ENCODE measurements at regions of chr1 and their contacts with region 1.

Region 1: DNA sequence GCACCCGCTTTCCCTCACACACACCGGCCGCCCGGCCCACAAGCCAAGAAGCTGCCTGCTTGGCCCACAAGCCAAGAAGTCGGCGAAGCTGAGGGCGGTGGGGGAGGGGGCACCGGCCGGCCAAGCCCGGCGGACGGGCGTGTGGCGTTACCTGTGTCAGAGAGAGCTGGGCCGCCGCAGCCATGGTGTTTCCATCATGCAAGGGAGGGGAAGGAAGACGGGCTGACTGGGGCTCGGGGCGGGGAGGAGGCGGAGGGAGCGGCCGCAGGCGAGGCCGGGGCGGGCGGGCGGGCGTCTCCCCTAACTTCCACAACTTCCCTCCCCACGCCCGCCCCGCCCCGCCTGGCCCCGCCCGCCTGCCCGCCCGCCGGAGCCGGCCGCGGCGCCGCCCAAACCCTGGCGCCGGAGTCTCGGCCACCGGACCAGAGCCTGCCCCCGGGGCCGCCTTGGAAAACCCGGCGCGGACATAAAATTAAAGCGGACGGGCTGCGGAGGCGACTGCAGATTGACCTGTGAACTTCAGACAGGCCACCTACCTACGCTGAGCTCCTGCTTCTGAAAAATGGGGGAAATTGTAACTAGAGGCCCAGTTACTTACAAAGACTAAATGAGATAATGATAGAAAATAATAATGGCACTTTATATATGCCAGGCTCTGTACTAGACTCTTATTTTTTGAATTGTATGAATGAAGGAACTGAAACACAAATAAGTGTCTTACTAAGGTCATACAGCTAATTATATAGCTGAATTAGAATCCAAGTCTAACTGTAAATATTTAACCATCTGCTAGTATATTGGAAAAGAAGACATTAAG is at the start of gene EPS15:
- DNase-seq: no peak
- ATAC-seq: peak; percentile 73
- H3K4me3 ChIP-seq: peak within 1 kb of the TSS; percentile 95
- H3K27ac ChIP-seq: peak within 1 kb of the TSS; percentile 83
- H3K4me1 ChIP-seq: peaks cover 11% of the 10 kb centered on the region
- H3K27me3 ChIP-seq: no peaks in the 10 kb centered on the region
- CTCF ChIP-seq: no peak
- EP300 ChIP-seq: no peak
- POLR2A ChIP-seq: peak; percentile 86
- RAD21 ChIP-seq: peak; percentile 33; the same call in 1 of the 2 replicates
- polyA plus RNA-seq, gene EPS15: 24.7 to 49.5 TPM

Region 2: GRCh38 chr1:51235673-51236530 is 283.4 kb before region 1 on chr1 and contains the start of gene RNF11:
- CTCF ChIA-PET with region 1: no interaction called
- POLR2A ChIA-PET with region 1: interaction called, 3 read pairs
- RAD21 ChIA-PET with region 1: no interaction called
- SMC1A ChIA-PET with region 1: interaction called, 4 read pairs
- in situ Hi-C with region 1: no loop called
- intact Hi-C with region 1: loop called (anchors 10 kb)
- DNase-seq: peak; percentile 54
- ATAC-seq: peak; percentile 87
- H3K4me3 ChIP-seq: peak within 1 kb of the TSS; percentile 99
- H3K27ac ChIP-seq: peak within 1 kb of the TSS; percentile 72
- H3K4me1 ChIP-seq: peaks cover 27% of the 10 kb centered on the region
- H3K27me3 ChIP-seq: no peaks in the 10 kb centered on the region
- CTCF ChIP-seq: no peak
- EP300 ChIP-seq: peak in 1 of 2 experiments; percentile 14; a peak in 1 of 4 replicates
- POLR2A ChIP-seq: peak; percentile 92
- RAD21 ChIP-seq: no peak
- polyA plus RNA-seq, gene RNF11: 9.5 to 14.5 TPM

Region 3: DNA sequence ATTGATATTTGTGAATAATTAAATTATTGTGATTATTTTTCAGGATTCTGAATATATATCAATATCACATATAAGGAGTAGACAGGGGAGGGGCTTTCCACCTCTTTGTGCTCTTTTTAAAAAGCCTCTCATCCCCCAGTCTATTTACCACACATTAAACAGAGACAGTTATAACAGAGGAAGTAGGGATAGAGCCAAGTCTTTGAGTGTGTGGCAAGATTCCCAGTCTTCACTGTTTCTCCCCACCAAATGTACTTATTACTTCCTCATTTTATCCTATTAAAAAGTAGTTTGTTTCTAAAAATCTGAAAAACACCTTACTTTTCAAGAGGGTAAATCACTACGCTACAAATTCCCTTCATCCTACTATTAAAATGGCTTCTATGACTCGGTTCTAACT is 46.9 kb before region 1 on chr1:
- CTCF ChIA-PET with region 1: no interaction called
- POLR2A ChIA-PET with region 1: no interaction called
- RAD21 ChIA-PET with region 1: interaction called, 4 read pairs
- SMC1A ChIA-PET with region 1: interaction called, 10 read pairs
- in situ Hi-C with region 1: no loop called
- intact Hi-C with region 1: no loop called
- DNase-seq: no peak
- ATAC-seq: no peak
- H3K4me3 ChIP-seq: no peak overlapping the region
- H3K27ac ChIP-seq: no peak overlapping the region
- H3K4me1 ChIP-seq: no peaks in the 10 kb centered on the region
- H3K27me3 ChIP-seq: no peaks in the 10 kb centered on the region
- CTCF ChIP-seq: no peak
- EP300 ChIP-seq: no peak
- POLR2A ChIP-seq: no peak
- RAD21 ChIP-seq: no peak

Region 4: DNA sequence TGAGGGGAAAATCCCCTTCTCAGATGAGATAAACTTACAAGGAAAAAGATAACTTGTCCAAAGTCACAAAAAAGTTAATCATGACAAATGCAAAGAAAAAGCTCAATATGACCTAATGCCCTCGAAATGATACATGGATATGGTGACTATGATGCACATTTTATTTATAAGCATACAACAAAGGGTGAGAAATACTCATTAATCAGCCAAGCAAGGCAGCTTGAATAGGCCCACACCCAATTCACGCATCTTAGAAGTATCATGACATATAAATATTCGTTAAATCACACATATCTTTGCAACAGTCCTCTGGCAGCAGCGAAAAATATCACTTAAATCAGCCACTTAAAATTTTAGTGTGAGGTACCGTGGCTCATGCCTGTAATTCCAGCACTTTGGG is 21.9 kb before region 1 on chr1:
- CTCF ChIA-PET with region 1: interaction called, 3 read pairs
- POLR2A ChIA-PET with region 1: interaction called, 83 read pairs
- RAD21 ChIA-PET with region 1: interaction called, 111 read pairs
- SMC1A ChIA-PET with region 1: interaction called, 147 read pairs
- in situ Hi-C with region 1: no loop called
- intact Hi-C with region 1: loop called (anchors 2 kb)
- DNase-seq: no peak
- ATAC-seq: no peak
- H3K4me3 ChIP-seq: no peak overlapping the region
- H3K27ac ChIP-seq: no peak overlapping the region
- H3K4me1 ChIP-seq: peaks cover 60% of the 10 kb centered on the region
- H3K27me3 ChIP-seq: no peaks in the 10 kb centered on the region
- CTCF ChIP-seq: no peak
- EP300 ChIP-seq: no peak
- POLR2A ChIP-seq: no peak
- RAD21 ChIP-seq: no peak

Region 5: DNA sequence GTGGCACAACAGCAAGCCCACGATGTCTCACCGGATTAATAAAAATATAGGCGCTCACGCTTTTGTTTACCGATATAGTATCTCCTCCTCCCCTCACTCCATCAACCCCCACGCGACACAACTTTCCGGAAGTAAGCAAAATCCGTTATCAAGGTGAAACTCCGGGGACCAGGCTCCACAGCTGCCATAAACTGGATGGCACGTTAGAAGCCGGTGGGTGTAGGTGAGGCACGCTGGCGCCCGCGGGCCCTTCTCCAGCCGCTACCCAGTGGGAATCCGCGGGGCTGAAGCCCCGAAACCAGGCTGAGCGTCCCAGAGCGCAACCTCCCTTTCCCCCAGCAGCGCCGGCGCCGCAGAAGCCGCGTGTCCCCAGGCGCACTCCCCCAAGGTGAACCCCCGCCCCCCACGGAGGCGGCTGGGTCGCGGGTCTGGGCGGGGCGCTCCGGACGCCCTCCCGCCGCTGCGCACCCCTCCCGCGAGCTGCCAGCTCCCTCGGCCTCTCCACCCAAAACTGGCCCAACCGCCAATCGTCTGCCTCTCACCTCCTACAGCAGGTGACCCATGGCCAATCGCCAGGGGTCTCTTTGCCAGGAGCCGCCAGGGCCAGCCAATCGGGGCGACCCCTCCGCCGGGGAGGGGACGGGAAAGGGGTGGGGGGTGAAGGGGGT is 210.0 kb after region 1 on chr1:
- CTCF ChIA-PET with region 1: no interaction called
- POLR2A ChIA-PET with region 1: interaction called, 5 read pairs
- RAD21 ChIA-PET with region 1: interaction called, 3 read pairs
- SMC1A ChIA-PET with region 1: interaction called, 3 read pairs
- in situ Hi-C with region 1: no loop called
- intact Hi-C with region 1: loop called (anchors 10 kb)
- DNase-seq: peak; percentile 87
- ATAC-seq: peak; percentile 91
- H3K4me3 ChIP-seq: peak overlapping the region; percentile 88
- H3K27ac ChIP-seq: peak overlapping the region; percentile 95
- H3K4me1 ChIP-seq: peaks cover 26% of the 10 kb centered on the region
- H3K27me3 ChIP-seq: no peaks in the 10 kb centered on the region
- CTCF ChIP-seq: no peak
- EP300 ChIP-seq: peak in 1 of 2 experiments; percentile 43; a peak in 2 of 4 replicates
- POLR2A ChIP-seq: peak; percentile 94
- RAD21 ChIP-seq: no peak

Measured in GM12878 (cell line).